Left cardiac atrium (tissue), 4 donors: ENCODE measurements at regions of chr15 and their contacts with region 1.

Region 1: DNA sequence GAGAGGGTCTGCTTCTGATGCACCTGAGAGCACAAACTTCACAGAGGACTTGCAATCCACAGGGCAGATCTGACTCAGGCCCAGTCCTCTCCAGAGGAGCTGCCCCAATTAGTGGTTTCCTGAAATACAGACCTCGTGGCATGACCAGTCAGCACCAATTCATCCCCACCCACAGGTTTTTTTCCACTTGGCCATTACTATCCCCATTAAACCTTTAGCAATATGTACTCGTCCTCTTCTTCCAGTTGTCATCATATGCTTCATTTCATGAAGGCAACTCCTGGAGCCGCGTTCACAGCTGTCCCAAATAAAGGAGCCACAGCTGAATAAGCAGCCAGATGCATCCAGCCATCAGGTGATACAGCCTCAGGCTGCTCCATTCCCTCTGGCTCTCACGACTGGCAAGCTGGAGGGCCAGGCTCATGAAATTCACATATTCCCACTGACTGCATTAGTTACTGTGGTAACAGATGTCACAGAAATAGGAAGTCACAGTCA is 163.1 kb downstream of the FMN1 start:
- DNase-seq: no peak
- ATAC-seq: no peak

Region 2: GRCh38 chr15:32818758-32819447 is 212.5 kb before region 1 on chr15:
- intact Hi-C with region 1: no loop called
- DNase-seq: no peak
- ATAC-seq: no peak

Region 3: GRCh38 chr15:33126559-33127290 is 95.4 kb after region 1 on chr15:
- intact Hi-C with region 1: loop called in 1 of 2 experiments (anchors 10 kb)
- DNase-seq: peak; percentile 73
- ATAC-seq: peak; percentile 72 to 81